ENCODE measurements at regions of chr12 and their contacts with region 1.

Region 1: GRCh38 chr12:69570545-69571399 is 14.5 kb upstream of the CCT2 start:
- DNase-seq: peak; percentile 63
- H3K4me3 ChIP-seq: no peak overlapping the region
- H3K27ac ChIP-seq: peak overlapping the region; percentile 77
- H3K4me1 ChIP-seq: peaks cover 21% of the 10 kb centered on the region
- H3K27me3 ChIP-seq: no peaks in the 10 kb centered on the region
- CTCF ChIP-seq: peak; percentile 69 to 80

Region 2: DNA sequence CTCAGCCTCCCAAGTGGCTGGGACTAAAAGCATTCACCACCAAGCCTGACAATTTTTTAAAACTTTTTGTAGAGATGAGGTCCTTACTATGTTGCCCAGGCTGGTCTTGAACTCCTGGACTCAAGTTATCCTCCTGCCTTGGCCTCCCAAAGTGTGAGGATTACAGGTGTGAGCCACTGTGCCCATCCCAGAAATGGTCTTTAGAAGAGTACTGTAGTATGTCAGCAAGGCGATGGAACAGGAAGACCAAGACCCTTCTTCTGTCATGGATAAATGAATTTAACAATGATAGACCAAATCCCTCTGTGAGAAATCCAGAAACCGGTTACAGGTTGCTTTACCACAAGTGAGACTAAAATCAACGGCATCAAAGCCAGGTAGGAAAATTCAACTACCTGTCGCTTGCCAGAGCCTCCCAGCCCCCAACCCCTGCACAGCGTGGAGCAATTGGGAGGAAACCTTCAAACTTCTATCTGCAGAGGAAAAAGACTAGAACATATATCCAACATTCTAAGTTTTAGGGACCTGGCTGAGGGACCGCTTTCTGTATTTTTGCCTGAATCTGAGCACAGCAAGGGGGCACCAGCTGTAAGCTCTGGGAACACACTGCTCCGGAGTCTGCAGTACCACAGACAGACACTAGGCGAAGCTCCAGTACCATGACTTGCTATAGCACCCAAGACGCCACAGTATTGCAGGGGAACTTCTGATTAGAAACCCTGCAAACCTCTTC is 280.1 kb before region 1 on chr12:
- CTCF ChIA-PET with region 1: no interaction called
- dilution Hi-C with region 1: no loop called
- in situ Hi-C with region 1: no loop called
- intact Hi-C with region 1: loop called (anchors 2 kb)
- DNase-seq: peak; percentile 68
- H3K4me3 ChIP-seq: no peak overlapping the region
- H3K27ac ChIP-seq: no peak overlapping the region
- H3K4me1 ChIP-seq: no peaks in the 10 kb centered on the region
- H3K27me3 ChIP-seq: peaks cover 1% of the 10 kb centered on the region
- CTCF ChIP-seq: peak; percentile 98 to 99

Region 3: DNA sequence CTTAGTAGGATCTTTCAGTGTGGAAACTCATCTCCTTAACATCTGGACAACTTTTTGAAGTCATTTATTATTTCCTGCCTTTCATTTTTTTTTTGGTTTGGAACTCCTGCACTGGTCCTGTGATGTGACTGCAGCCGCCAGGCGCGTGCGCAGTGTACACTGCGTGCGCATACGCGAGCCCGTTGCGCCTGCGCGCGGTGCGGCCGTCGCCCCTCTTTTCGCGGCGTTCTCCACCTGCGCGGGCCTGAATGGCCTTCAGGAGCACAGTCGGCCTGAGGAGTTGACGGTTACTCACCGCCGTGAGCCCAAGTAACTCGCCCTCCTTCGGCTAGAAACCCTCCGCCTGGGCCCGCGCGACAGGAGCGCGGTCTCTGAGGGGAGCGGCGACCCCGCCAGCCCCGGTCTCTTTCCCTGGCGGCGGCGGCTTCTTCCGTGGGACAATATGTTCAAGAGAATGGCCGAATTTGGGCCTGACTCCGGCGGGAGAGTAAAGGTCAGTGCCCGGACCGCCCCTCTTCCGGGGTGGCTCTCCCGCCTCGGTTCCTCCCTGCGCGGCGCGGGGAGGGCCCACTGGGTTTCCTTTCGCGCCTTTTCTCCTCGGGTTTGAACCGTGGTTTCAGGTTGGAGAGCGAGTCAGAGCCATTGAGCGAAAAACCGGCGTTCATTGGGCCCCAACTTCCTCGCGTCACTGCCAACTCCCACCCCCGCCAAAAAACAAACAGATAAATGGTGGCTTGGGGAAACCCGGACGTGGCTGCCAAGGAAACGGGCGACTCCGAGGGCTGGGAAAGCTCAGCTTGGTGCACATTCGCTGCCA is 211.0 kb before region 1 on chr12 and contains the start of gene YEATS4:
- CTCF ChIA-PET with region 1: interaction called, 3 read pairs
- dilution Hi-C with region 1: no loop called
- in situ Hi-C with region 1: no loop called
- intact Hi-C with region 1: loop called (anchors 1 kb)
- DNase-seq: peak; percentile 98
- H3K4me3 ChIP-seq: peak within 1 kb of the TSS; percentile 44 to 77 (median 74)
- H3K27ac ChIP-seq: peak within 1 kb of the TSS; percentile 97
- H3K4me1 ChIP-seq: peaks cover 8% of the 10 kb centered on the region
- H3K27me3 ChIP-seq: no peaks in the 10 kb centered on the region
- CTCF ChIP-seq: no peak
- total RNA-seq, gene YEATS4: 18.2 to 19.7 TPM

Region 4: DNA sequence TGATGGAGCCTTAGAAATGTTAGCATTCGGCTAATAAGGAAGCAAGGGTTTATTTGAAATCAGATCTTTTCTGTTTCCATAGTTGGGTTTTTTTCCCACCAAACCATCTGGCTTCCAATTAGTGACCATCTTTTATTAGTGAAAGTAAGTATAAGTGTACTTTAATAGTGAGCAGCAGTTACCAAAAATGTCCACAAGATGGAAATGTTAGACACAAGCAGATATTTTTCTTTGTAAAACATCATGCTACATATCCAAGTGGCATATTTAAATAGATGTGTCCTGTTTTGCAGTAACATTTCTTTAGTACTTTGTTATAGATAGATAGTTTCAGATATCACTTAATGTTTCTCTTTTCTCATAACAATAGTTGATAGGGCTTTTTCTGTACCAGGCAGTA is 182.4 kb before region 1 on chr12:
- CTCF ChIA-PET with region 1: no interaction called
- dilution Hi-C with region 1: no loop called
- in situ Hi-C with region 1: no loop called
- intact Hi-C with region 1: loop called (anchors 1 kb)
- DNase-seq: peak; percentile 37
- H3K4me3 ChIP-seq: no peak overlapping the region
- H3K27ac ChIP-seq: no peak overlapping the region
- H3K4me1 ChIP-seq: peaks cover 6% of the 10 kb centered on the region
- H3K27me3 ChIP-seq: no peaks in the 10 kb centered on the region
- CTCF ChIP-seq: peak; percentile 50 to 56

Region 5: DNA sequence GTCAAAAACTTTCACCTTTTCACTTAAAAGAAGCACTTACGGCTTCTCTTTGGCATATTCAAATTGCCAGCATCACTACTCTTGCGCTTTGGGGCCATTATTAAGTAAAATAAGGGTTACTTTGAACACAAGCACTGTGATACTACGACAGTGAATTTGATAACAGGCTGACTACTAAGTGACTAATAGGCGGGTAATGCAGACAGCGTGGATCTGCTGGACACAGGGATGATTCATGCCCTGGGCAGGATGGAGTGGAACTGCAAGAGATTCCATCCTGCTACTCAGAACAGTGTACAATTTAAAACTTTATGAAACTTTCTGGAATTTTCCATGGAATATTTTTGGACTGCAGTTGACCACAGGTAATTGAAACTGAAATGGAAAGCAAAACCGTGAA is 165.3 kb before region 1 on chr12:
- CTCF ChIA-PET with region 1: no interaction called
- dilution Hi-C with region 1: loop called (anchors 10 kb)
- in situ Hi-C with region 1: loop called in 1 of 2 experiments (anchors 10 kb)
- intact Hi-C with region 1: no loop called
- DNase-seq: peak; percentile 86
- H3K4me3 ChIP-seq: no peak overlapping the region
- H3K27ac ChIP-seq: no peak overlapping the region
- H3K4me1 ChIP-seq: peaks cover 12% of the 10 kb centered on the region
- H3K27me3 ChIP-seq: no peaks in the 10 kb centered on the region
- CTCF ChIP-seq: no peak

Region 6: DNA sequence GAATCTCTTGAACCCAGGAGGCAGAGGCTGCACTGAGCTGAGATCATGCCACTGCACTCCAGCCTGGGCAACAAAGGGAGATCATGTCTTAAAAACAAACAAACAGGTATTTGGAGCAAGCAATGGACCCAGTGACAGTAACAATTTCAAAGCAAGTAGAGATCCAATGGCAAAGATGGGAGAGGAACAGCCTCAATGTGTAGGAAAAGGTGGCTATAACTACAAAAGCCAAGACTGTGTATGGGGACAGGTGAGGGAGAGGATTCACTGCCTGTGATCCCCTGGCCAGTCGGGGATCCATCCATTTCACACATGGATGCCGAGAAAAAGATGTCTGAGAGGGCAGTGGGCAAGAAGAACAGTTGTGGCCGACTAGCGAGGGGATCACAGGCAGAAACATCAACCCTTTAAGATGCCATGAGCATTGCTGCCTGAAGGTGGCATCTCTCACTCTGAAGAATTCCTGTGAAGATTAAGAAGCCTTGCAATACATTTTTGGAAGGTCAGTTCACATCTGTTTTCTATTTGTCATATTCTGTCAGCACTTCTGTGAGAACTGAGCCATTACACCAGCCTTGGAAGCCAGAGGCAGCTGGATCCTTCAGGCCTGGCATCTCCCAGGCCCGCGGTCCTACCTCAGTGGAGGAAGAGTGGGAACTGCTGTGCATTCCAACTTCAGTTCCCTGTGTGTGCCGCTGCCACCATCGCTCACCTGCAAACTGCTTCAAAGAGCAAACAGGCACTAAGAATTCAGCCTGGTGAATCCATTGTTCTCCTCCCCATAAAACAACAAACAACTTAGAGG is 155.1 kb before region 1 on chr12:
- CTCF ChIA-PET with region 1: no interaction called
- dilution Hi-C with region 1: no loop called
- in situ Hi-C with region 1: no loop called
- intact Hi-C with region 1: loop called (anchors 1 kb)
- DNase-seq: peak; percentile 57
- H3K4me3 ChIP-seq: no peak overlapping the region
- H3K27ac ChIP-seq: no peak overlapping the region
- H3K4me1 ChIP-seq: peaks cover 7% of the 10 kb centered on the region
- H3K27me3 ChIP-seq: no peaks in the 10 kb centered on the region
- CTCF ChIP-seq: peak; percentile 89 to 92

Region 7: GRCh38 chr12:69470189-69471075 is 100.3 kb before region 1 on chr12 and contains the start of gene FRS2:
- CTCF ChIA-PET with region 1: interaction called, 6 read pairs
- dilution Hi-C with region 1: no loop called
- in situ Hi-C with region 1: loop called in 1 of 2 experiments (anchors 5 kb)
- intact Hi-C with region 1: loop called (anchors 1 kb)
- DNase-seq: peak; percentile 85
- H3K4me3 ChIP-seq: peak within 1 kb of the TSS; percentile 92 to 99 (median 94)
- H3K27ac ChIP-seq: peak within 1 kb of the TSS; percentile 84
- H3K4me1 ChIP-seq: peaks cover 27% of the 10 kb centered on the region
- H3K27me3 ChIP-seq: no peaks in the 10 kb centered on the region
- CTCF ChIP-seq: peak; percentile 24 to 57
- total RNA-seq, gene FRS2: 30.0 to 72.7 TPM

Region 8: GRCh38 chr12:69585189-69586062 is 14.7 kb after region 1 on chr12 and contains the start of gene CCT2:
- CTCF ChIA-PET with region 1: no interaction called
- dilution Hi-C with region 1: no loop called
- in situ Hi-C with region 1: no loop called
- intact Hi-C with region 1: no loop called
- DNase-seq: peak; percentile 90
- H3K4me3 ChIP-seq: peak within 1 kb of the TSS; percentile 75 to 96 (median 80)
- H3K27ac ChIP-seq: peak within 1 kb of the TSS; percentile 94
- H3K4me1 ChIP-seq: peaks cover 4% of the 10 kb centered on the region
- H3K27me3 ChIP-seq: no peaks in the 10 kb centered on the region
- CTCF ChIP-seq: peak in 1 of 2 donors; percentile 43
- total RNA-seq, gene CCT2: 208 to 237 TPM

Region 9: GRCh38 chr12:69630191-69630590 is 59.4 kb after region 1 on chr12:
- CTCF ChIA-PET with region 1: no interaction called
- dilution Hi-C with region 1: no loop called
- in situ Hi-C with region 1: no loop called
- intact Hi-C with region 1: no loop called
- DNase-seq: no peak
- H3K4me3 ChIP-seq: no peak overlapping the region
- H3K27ac ChIP-seq: no peak overlapping the region
- H3K4me1 ChIP-seq: no peaks in the 10 kb centered on the region
- H3K27me3 ChIP-seq: no peaks in the 10 kb centered on the region
- CTCF ChIP-seq: peak; percentile 36 to 37

Measured in mammary epithelial cell (primary cell).